Right ventricle myocardium inferior (tissue), 1 donor: ENCODE measurements at regions of chr4 and their contacts with region 1.

Region 1: GRCh38 chr4:152385551-152385950 is 150.3 kb downstream of the FBXW7 start:
- DNase-seq: no peak
- ATAC-seq: no peak

Region 2: GRCh38 chr4:151117371-151117962 is 1268.1 kb before region 1 on chr4:
- intact Hi-C with region 1: loop called (anchors 10 kb)
- DNase-seq: no peak
- ATAC-seq: peak; percentile 62

Region 3: DNA sequence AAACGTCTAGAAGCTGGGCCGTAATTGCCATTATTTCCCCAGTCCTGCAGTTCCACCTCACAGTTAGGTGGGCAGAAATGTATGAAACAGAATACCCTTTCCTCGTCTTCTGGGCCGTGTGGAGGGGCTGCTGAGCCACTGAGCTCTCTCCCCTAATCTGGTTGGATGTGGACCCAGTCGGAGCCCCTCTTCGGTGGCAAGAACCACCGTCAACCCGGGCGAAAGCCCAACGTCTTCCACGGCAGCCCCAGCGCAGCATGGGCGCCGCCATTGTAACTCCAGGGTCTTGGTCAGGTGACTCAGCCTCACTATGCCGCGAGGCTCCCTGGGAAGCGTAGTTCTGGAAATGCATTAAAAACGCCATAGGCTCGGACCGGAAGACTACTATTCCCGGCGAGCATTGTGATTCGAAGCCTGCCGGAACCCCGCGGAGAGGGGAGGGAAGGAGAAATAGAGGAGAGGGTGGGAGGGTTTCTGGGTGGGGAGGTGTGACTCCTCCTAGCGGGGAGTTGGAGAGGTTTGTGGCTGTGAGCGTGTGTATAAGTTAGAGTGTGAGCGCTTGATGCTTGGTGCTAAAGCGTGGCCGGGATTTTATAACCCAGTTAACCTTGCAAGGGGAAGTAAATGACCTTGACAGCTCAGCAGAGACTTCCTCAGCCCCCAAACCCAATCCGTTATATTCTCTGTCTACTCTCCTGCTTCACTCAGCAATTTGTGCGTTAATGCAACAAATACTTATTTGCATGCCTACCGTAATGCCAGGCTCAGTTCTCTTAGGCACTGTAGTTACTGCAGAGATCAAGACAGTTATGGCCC is 624.6 kb before region 1 on chr4 and contains the start of gene GATB:
- intact Hi-C with region 1: loop called (anchors 10 kb)
- DNase-seq: peak; percentile 95
- ATAC-seq: peak; percentile 99
- total RNA-seq, gene GATB: 171 TPM

Region 4: GRCh38 chr4:152112887-152113286 is 272.7 kb before region 1 on chr4:
- intact Hi-C with region 1: no loop called
- DNase-seq: no peak
- ATAC-seq: no peak